Breast epithelium (tissue), 4 donors: ENCODE measurements at regions of chr10 and their contacts with region 1.

Region 1: DNA sequence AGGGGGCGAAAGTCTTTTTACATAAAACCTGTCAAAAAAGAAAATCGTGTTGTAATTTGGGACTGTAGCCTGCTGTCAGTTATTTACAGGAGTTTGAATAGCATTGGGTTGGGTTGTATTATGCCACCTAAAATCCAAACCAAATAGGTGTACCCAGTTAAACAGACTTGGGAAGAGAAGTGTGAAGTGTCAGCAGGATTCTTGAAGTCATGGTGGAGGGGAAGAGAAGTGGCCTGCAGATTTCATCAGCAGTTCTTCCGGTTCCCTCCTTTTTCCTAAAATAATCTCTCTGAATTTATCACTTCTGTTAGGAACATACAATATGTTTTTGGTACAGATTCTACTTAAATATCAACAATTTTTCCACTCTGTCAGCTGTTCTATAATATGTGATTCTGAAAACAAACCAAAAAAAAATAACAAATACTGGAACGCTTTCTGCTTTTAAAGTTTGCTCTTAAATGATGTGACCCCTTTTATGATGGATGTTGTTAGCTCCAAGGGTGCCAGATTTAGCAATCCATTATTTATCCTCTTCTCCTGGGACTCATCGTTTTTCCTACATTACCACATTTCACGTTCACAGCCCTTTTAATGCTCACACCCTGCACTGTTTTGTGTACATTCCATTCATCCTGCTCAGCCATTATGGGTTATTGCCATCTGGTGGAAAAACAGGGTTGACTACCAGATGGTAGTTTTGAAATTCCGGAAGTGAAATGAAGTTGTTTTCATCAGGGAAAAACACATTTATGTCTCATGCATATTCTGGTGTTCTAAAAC is 18.7 kb upstream of the ARHGAP12 start:
- DNase-seq: no peak
- H3K4me3 ChIP-seq: peak overlapping the region in 1 of 3 donors; percentile 6
- H3K27ac ChIP-seq: peak overlapping the region; percentile 18 to 44
- H3K4me1 ChIP-seq: no peaks in the 10 kb centered on the region
- H3K27me3 ChIP-seq: no peaks in the 10 kb centered on the region
- CTCF ChIP-seq: peak in 2 of 3 donors; percentile 40 to 56
- POLR2A ChIP-seq: no peak

Region 2: DNA sequence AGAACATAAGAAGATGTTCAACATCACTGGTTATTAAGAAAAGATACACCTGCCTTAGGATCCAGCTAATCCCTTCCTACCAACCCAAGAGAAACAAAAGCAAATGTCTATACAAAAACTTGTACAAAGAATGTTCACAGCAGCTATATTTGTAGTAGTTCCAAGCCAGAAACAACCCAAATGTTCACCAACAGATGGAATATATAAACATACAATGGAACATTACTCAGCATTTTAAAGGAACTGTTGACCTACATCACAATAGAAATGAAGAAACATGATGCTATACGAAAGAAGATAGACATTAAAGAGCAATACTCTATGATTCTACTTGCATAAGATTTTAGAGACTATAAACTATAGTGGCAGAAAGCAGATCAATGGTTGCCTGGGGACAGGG is 1065.1 kb before region 1 on chr10:
- intact Hi-C with region 1: loop called (anchors 5 kb)
- DNase-seq: no peak
- H3K4me3 ChIP-seq: no peak overlapping the region
- H3K27ac ChIP-seq: no peak overlapping the region
- H3K4me1 ChIP-seq: no peaks in the 10 kb centered on the region
- H3K27me3 ChIP-seq: no peaks in the 10 kb centered on the region
- CTCF ChIP-seq: no peak
- POLR2A ChIP-seq: no peak

Region 3: GRCh38 chr10:31620226-31621151 is 326.8 kb before region 1 on chr10:
- intact Hi-C with region 1: no loop called
- DNase-seq: no peak
- H3K4me3 ChIP-seq: no peak overlapping the region
- H3K27ac ChIP-seq: peak overlapping the region; percentile 23 to 58
- H3K4me1 ChIP-seq: no peaks in the 10 kb centered on the region
- H3K27me3 ChIP-seq: no peaks in the 10 kb centered on the region
- CTCF ChIP-seq: peak in 1 of 3 donors; percentile 33
- POLR2A ChIP-seq: no peak

Region 4: GRCh38 chr10:31635415-31636065 is 311.8 kb before region 1 on chr10:
- intact Hi-C with region 1: loop called (anchors 5 kb)
- DNase-seq: no peak
- H3K4me3 ChIP-seq: no peak overlapping the region
- H3K27ac ChIP-seq: no peak overlapping the region
- H3K4me1 ChIP-seq: no peaks in the 10 kb centered on the region
- H3K27me3 ChIP-seq: no peaks in the 10 kb centered on the region
- CTCF ChIP-seq: no peak
- POLR2A ChIP-seq: no peak

Region 5: GRCh38 chr10:32256613-32257437 is 309.5 kb after region 1 on chr10:
- intact Hi-C with region 1: no loop called
- DNase-seq: peak; percentile 51 to 62
- H3K4me3 ChIP-seq: peak overlapping the region in 1 of 3 donors; percentile 37
- H3K27ac ChIP-seq: no peak overlapping the region
- H3K4me1 ChIP-seq: no peaks in the 10 kb centered on the region
- H3K27me3 ChIP-seq: no peaks in the 10 kb centered on the region
- CTCF ChIP-seq: peak; percentile 78 to 90 (median 84)
- POLR2A ChIP-seq: no peak

Region 6: GRCh38 chr10:32386623-32387260 is 439.4 kb after region 1 on chr10:
- intact Hi-C with region 1: no loop called
- DNase-seq: no peak
- H3K4me3 ChIP-seq: no peak overlapping the region
- H3K27ac ChIP-seq: no peak overlapping the region
- H3K4me1 ChIP-seq: no peaks in the 10 kb centered on the region
- H3K27me3 ChIP-seq: no peaks in the 10 kb centered on the region
- CTCF ChIP-seq: no peak
- POLR2A ChIP-seq: no peak